G401 (cell line): ENCODE measurements at regions of chr13 and their contacts with region 1.

Region 1: DNA sequence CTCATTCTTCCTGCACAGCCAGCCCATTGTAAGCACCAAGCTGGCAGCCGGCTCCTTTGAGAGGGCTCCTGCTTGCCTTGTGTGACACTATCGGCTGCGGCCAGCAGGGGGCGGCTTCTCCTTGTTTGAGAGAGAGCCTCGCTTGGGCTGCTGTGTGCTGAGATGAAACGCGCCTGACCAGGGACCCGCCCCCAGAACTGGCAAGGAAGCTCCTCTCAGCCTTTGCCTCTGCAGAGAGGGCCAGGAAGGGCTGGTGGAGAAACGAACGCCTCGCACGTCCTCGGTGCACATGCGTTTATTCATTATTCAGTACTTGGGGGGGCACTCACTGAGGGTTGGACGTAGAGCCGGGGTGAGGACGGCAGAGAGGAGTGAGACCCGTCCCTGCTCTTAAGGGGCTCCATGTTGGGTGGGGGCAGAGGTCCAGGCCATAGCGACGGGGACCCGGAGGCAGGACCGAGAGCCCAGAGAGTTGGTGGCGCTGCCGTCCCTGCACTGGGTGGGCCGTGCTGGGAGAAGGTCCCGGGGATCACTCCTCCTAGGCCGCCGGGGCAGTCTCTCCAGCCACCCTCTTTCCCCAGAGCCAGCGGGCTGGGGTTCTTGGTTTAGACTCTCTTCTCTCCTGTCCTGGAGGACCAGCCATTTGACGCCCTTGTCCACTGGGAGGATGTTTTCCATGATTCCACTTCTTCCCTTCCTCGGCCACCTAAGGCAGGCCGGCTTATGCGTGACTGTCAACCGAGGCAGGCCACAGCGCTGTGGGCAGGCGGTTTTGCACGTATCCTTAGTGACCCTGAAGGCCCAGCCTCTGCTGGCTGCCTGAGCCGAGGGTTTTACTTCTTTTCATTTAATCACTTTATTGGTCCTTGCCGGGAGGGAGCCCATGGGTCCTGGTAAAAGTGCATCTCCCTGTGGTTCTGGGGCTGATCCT is 174.5 kb downstream of the KATNAL1 start:
- DNase-seq: peak; percentile 94

Region 2: GRCh38 chr13:30334663-30335386 is 201.9 kb after region 1 on chr13:
- in situ Hi-C with region 1: loop called (anchors 25 kb)
- DNase-seq: peak; percentile 27